Mammary epithelial cell (primary cell): ENCODE measurements at regions of chr12 and their contacts with region 1.

Region 1: DNA sequence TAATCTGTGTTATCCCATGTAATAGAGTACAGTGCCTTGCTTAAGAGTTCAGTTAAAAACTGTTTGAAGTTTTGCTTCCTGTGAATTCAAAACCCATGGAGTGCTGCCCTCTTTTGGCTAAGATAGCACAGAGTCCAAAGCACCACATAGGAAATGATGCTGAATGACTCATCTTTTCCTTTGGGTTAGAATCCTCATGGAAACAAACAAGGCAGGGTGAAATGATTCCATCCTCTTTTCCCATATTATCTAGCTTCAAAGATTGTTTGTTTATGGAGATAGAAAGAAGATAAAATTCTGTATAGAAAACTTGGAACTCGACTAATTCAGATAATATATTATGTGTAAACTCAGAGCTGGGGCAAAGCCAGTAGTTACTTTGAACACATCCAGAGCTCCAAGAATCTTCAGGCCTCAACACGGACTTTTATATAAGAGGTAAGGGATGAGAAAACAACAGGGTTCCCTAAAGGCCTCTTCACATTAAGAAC is 87.4 kb downstream of the OTOGL start:
- DNase-seq: peak; percentile 82
- H3K4me3 ChIP-seq: no peak overlapping the region
- H3K27ac ChIP-seq: peak overlapping the region; percentile 70
- H3K4me1 ChIP-seq: peaks cover 10% of the 10 kb centered on the region
- H3K27me3 ChIP-seq: no peaks in the 10 kb centered on the region
- CTCF ChIP-seq: peak; percentile 85 to 87

Region 2: DNA sequence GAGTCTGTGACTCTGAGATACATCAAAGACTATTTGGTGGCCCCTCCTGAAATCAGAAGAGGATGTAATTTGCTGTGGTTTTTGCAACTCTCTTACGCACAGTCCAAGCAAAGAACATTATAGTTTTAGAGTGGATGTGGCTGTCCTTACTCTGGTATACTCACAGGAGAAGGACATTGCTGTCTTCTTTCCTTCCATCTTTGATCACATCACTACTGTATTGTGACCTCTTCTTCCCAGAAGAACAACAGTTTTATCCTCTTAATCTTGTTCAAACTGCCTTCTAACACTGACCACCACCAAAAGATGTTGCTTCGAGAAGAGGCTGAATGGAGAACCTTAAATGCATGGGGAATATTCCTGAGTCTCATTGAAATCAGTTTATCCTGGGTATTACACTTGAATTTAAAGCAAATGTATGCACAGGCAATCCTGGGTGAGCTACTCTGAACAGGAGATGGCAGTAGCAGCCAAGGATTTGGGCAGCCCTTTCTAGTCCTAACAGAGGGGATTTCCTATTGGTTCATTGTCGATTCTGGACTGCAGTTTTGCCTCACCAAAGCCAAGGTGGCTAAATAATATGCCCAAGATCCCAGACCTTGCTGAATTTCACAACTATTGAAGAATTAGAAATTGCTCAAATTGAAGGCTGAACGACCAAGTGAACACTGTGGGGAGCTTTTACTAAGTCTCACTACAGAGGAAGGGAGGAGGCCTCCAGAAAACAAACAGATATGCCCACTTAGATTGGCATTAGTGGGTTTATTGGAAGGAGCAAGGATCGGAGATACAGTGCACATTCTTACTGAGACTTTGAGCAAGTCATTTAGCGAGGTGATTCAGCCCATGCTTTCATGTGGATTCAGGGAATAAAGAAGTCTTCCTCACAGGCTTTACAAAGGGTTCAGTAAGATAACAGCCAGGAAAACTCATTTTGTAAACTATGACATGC is 778.8 kb before region 1 on chr12:
- CTCF ChIA-PET with region 1: no interaction called
- dilution Hi-C with region 1: no loop called
- in situ Hi-C with region 1: loop called (anchors 10 kb)
- intact Hi-C with region 1: loop called (anchors 1 kb)
- DNase-seq: peak; percentile 81
- H3K4me3 ChIP-seq: no peak overlapping the region
- H3K27ac ChIP-seq: peak overlapping the region; percentile 20
- H3K4me1 ChIP-seq: peaks cover 38% of the 10 kb centered on the region
- H3K27me3 ChIP-seq: no peaks in the 10 kb centered on the region
- CTCF ChIP-seq: peak; percentile 83 to 90

Region 3: GRCh38 chr12:79503281-79503680 is 683.5 kb before region 1 on chr12:
- CTCF ChIA-PET with region 1: no interaction called
- dilution Hi-C with region 1: no loop called
- in situ Hi-C with region 1: no loop called
- intact Hi-C with region 1: no loop called
- DNase-seq: no peak
- H3K4me3 ChIP-seq: no peak overlapping the region
- H3K27ac ChIP-seq: no peak overlapping the region
- H3K4me1 ChIP-seq: no peaks in the 10 kb centered on the region
- H3K27me3 ChIP-seq: no peaks in the 10 kb centered on the region
- CTCF ChIP-seq: no peak

Region 4: DNA sequence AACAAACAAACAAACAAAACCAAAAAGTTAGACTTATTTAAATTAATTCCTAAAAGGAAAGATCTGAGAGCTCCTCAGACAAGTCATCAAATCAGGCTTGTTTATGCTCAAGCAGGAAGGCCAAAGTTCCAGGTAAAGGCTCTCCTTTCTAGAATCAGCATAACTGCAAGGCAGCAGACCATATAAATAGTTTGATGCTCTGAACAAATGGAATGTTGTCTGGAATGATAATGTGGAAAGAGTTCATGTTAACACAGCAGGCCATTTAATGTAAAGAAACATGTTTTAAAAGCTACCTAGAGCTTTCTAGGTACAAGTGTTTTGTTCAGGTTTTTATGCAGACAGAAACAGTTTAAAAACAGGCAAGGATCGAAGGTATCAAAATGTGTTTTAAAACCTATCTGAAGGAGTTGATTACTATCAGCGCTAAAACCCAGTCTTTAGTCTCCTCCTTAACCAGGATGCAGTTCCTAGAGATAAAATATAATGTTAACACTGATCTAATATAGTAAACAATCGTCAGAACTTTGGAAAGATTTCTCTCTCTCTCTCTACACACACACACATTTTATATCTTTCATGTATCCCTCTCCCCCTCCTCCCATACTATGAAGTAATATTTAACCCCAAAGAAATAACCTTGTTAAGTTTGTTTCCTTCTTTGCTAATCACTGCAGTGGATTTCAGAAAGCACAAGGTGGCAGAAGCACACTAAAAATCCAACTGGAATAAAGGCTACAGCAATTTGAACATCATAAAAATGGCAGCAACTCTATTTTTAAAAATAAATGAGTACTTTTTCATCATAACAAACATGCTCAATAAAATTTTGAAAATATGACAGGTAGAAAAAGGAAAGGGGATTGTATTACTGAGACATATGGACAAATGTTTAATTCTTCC is 631.5 kb before region 1 on chr12:
- CTCF ChIA-PET with region 1: no interaction called
- dilution Hi-C with region 1: no loop called
- in situ Hi-C with region 1: no loop called
- intact Hi-C with region 1: loop called (anchors 2 kb)
- DNase-seq: peak; percentile 28
- H3K4me3 ChIP-seq: no peak overlapping the region
- H3K27ac ChIP-seq: no peak overlapping the region
- H3K4me1 ChIP-seq: no peaks in the 10 kb centered on the region
- H3K27me3 ChIP-seq: no peaks in the 10 kb centered on the region
- CTCF ChIP-seq: peak; percentile 44 to 65

Region 5: DNA sequence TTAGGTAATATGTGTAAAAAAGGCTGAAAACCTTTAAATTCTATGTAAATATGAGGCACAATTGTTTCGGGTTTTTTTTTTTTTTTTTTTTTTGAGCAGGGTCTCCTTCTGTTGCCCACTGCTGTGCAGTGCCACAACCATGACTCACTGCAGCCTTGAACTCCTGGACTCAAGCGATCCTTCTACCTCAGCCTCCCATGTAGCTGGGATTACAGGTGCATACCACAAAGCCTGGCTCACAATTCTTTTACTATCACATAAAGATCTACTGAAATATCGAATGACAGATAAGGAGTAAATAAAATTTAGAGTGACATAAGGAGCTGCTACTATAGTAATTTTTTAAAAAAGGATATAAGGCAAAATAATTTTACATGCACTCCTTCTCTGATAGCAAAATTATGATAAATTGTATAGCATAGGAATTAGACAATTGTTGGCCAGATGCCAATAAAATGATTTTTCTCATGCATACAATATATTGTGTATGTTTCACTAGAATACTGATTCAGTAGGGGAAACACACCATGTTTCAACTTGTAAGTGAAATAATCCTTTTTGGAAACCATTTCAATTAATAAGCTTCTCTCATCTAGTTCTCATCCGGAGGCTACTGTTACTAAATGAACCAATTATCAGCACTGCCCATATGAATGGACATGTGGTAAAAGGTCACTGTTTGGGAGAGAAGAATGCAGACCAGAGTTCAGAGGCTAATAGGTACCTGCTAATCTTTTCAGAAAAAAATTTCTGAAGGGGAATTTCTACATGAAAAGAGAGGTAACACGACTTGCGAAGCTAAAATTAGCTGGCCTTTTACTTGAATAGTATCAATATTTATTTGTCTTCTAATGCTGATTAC is 360.3 kb before region 1 on chr12:
- CTCF ChIA-PET with region 1: no interaction called
- dilution Hi-C with region 1: no loop called
- in situ Hi-C with region 1: no loop called
- intact Hi-C with region 1: loop called (anchors 10 kb)
- DNase-seq: no peak
- H3K4me3 ChIP-seq: no peak overlapping the region
- H3K27ac ChIP-seq: no peak overlapping the region
- H3K4me1 ChIP-seq: no peaks in the 10 kb centered on the region
- H3K27me3 ChIP-seq: no peaks in the 10 kb centered on the region
- CTCF ChIP-seq: no peak

Region 6: GRCh38 chr12:79897617-79898016 is 289.2 kb before region 1 on chr12:
- CTCF ChIA-PET with region 1: no interaction called
- dilution Hi-C with region 1: no loop called
- in situ Hi-C with region 1: no loop called
- intact Hi-C with region 1: no loop called
- DNase-seq: peak; percentile 97
- H3K4me3 ChIP-seq: no peak overlapping the region
- H3K27ac ChIP-seq: peak overlapping the region; percentile 55
- H3K4me1 ChIP-seq: peaks cover 23% of the 10 kb centered on the region
- H3K27me3 ChIP-seq: no peaks in the 10 kb centered on the region
- CTCF ChIP-seq: no peak

Region 7: DNA sequence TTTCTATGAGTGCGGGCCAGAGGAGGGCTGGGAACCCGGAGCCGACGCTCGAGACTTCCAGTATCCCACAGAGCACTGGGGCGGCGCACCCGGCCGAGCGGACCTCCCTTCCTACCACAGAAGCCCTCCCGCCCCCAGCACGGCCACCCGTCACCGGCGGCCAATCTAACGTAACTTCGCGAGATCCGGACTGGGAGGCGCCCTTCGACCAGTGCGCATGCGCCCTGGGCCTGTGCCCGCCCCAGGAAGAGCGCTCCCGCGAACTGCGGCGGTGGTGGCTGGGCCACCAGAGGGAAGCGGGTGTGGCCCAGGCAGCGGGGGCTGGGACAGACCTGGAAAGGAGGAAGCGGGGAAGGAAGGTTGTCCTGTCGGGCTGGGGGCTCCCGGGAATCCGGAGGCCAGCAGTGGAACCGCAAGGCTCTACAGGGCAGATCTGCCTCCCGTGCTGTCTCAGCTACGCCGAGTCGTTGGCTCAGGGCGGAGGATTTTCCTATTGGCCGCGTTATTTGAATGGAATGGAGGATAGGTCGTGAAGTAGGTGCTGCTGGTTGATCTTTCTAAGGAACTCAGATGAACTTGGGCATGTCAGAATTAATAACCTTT is 251.7 kb before region 1 on chr12 and contains the start of gene PPP1R12A:
- CTCF ChIA-PET with region 1: no interaction called
- dilution Hi-C with region 1: no loop called
- in situ Hi-C with region 1: no loop called
- intact Hi-C with region 1: loop called (anchors 1 kb)
- DNase-seq: peak; percentile 97
- H3K4me3 ChIP-seq: peak within 1 kb of the TSS; percentile 66 to 89 (median 85)
- H3K27ac ChIP-seq: peak within 1 kb of the TSS; percentile 94
- H3K4me1 ChIP-seq: peaks cover 9% of the 10 kb centered on the region
- H3K27me3 ChIP-seq: no peaks in the 10 kb centered on the region
- CTCF ChIP-seq: peak in 1 of 2 donors; percentile 25
- total RNA-seq, gene PPP1R12A: 83.2 to 101 TPM

Region 8: GRCh38 chr12:80269803-80270552 is 83.2 kb after region 1 on chr12:
- CTCF ChIA-PET with region 1: interaction called, 10 read pairs
- dilution Hi-C with region 1: no loop called
- in situ Hi-C with region 1: loop called in 1 of 2 experiments (anchors 10 kb)
- intact Hi-C with region 1: no loop called
- DNase-seq: peak; percentile 16
- H3K4me3 ChIP-seq: no peak overlapping the region
- H3K27ac ChIP-seq: no peak overlapping the region
- H3K4me1 ChIP-seq: peaks cover 18% of the 10 kb centered on the region
- H3K27me3 ChIP-seq: no peaks in the 10 kb centered on the region
- CTCF ChIP-seq: peak; percentile 60 to 62